Calu3 (cell line): ENCODE measurements at regions of chr16 and their contacts with region 1.

Region 1: DNA sequence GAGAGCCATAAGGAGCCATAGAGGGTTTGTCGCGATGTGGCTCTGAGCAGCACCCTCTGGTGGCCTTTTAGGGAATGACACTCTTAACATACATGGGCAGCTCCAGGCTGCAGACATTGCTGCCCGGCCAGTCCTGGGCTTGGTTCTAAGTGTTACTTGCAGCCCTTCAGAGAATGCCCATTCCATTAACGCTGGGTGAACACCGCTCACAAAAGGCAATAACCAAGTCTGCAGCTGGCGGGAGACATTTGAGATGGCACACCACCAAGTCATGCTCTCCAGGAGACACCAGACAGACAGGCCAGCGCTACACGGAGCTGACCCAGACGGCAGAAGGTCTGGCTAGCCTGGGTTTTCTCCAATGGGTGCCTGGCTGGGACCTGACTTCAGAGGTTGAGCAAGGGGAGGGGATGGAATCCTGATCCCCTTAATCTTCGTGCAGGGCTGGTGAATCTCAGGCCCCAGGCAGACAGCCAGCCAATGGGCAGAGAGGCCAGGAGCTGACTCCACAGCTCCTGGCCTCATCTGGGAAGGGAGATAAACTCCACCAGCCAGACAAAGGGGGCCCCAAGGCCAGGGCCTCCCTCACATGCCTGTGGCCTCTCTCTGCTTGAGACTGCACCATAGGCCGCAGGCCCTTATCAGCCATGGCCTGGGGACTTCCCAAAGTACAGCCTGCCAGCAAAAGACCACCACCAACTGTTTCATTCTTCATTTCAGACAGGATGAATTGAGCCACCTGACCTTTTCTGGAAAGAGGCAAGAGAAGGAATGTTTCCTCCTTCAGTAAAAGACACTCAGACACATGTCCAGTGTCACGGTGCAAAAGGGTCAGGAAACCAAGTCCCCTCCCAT is 58.8 kb downstream of the ZDHHC7 start:
- DNase-seq: peak; percentile 87
- H3K4me3 Mint-ChIP-seq: no peak overlapping the region
- H3K27ac Mint-ChIP-seq: no peak overlapping the region
- H3K4me1 Mint-ChIP-seq: no peaks in the 10 kb centered on the region
- H3K27me3 Mint-ChIP-seq: peaks cover 11% of the 10 kb centered on the region
- CTCF ChIP-seq: peak; percentile 93

Region 2: DNA sequence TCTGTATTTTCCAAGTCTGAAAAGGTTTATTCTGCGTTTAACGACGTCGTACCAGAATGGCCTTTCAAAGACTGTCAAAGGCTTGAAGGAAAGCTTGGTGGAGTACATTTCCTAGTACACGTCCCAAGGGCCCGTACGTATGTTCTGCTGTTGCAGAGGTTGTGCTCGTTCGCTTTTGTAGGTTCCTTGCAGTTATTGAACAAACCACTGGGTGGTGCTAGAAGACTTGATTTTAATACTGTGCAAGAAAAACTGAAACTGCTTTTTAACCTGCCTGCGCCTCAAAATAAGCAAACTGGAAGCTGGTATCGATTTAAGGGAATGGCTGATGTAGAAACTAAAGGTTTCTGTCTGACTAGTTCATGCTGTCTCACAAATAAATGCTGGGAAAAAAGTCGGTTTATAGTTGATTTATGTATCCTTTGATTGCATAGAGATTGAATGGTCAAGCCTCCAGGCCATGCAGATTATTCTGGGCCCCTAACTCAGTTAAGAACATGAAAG is 198.2 kb before region 1 on chr16:
- CTCF ChIA-PET with region 1: interaction called, 44 read pairs
- intact Hi-C with region 1: loop called (anchors 1 kb)
- DNase-seq: peak; percentile 84
- H3K4me3 Mint-ChIP-seq: no peak overlapping the region
- H3K27ac Mint-ChIP-seq: no peak overlapping the region
- H3K4me1 Mint-ChIP-seq: peaks cover 24% of the 10 kb centered on the region
- H3K27me3 Mint-ChIP-seq: no peaks in the 10 kb centered on the region
- CTCF ChIP-seq: peak; percentile 79

Region 3: GRCh38 chr16:84925092-84925772 is 27.3 kb before region 1 on chr16:
- CTCF ChIA-PET with region 1: interaction called, 5 read pairs
- intact Hi-C with region 1: loop called (anchors 1 kb)
- DNase-seq: peak; percentile 84
- H3K4me3 Mint-ChIP-seq: no peak overlapping the region
- H3K27ac Mint-ChIP-seq: no peak overlapping the region
- H3K4me1 Mint-ChIP-seq: no peaks in the 10 kb centered on the region
- H3K27me3 Mint-ChIP-seq: peaks cover 34% of the 10 kb centered on the region
- CTCF ChIP-seq: peak; percentile 98

Region 4: DNA sequence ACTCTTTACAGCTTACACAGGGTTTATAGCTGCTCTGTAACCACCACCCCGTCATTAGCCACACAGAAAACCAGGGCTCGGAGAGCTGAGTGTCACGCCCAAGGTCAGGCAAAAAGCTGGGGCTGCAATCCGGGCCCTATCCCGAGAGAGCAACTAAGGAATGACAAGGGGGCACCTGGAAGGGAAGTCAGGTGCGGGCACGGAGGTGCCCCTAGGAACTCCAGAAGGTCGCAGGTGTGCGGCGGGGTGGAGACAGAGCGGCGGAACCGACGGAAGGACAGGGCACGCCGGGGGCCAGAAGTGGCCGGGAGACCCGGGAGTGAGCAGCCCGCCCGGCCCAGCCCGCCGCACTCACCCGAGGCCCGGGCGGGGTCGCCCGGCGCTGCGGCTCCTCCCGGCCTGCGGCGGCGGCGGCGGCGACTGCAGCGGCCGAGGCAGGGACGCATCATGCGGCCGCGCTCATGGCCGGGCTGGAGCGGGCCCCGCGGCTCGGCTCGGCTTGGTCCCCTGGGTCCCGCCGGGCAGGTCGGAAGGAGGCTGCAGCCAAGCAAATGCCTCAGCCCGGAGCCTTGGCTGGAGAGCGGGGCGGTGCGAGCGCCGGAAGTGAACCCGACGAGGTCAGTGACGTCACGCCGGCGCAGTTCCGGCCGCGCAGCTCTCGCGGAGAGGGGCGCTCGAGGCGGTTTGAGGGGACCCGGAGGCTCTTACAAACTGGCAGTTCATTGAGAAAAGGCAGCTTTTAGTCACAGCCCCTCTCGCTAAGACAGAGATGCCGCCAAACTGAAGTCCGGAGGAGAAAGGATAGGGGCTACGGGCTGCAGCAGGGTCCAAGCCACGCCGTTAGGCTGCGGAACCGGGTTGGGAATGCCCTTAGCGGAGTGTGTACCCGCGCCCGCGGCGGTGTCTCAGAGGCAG is 58.6 kb after region 1 on chr16 and contains the start of gene ZDHHC7:
- CTCF ChIA-PET with region 1: no interaction called
- intact Hi-C with region 1: no loop called
- DNase-seq: peak; percentile 92
- H3K4me3 Mint-ChIP-seq: peak within 1 kb of the TSS; percentile 89
- H3K27ac Mint-ChIP-seq: peak within 1 kb of the TSS; percentile 89
- H3K4me1 Mint-ChIP-seq: peaks cover 36% of the 10 kb centered on the region
- H3K27me3 Mint-ChIP-seq: no peaks in the 10 kb centered on the region
- CTCF ChIP-seq: no peak
- total RNA-seq, gene ZDHHC7: 100 and 109 TPM in 2 replicates